A673 (cell line): ENCODE measurements at regions of chrX and their contacts with region 1.

Region 1: DNA sequence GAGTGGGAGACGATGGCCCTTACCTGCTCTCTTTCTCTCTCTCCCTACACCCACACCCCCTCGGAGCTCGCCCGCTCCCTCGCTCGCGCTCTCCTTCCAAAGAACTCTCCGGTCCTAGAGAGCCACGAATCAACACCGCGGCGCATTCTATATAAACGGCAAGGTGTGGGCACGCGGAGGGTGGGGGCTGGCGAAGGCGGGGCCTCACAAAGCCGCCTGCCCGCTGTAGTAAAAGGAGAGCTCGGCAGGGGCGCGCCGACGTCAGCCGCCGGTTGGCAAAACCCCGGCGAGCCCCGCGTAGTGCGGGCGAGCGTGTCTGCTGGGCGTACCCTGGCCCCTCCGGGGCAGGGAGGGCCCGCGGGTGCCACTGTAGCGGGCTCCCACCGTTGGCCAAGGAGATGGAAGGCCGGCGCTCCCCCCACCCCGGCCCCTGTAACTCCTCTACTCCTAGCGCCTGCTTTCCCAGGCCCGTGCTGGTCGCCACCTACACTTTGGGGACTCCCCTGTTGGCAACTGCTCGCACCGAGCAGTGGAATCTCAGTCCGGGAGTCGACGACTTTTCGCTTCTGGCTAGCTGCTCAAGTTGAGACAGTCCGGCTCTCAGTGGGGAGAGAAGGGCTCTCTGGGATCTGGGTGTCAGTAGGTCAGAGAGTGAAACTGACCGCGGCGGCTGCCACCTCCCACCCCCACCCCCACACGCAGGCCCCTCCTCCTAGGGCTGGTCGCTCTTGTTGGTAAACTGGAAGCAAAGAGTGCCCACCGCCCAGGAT is 325.5 kb upstream of the F9 start:
- DNase-seq: peak; percentile 83
- H3K4me3 ChIP-seq: peak overlapping the region; percentile 64
- H3K27ac ChIP-seq: peak overlapping the region; percentile 84
- H3K4me1 ChIP-seq: no peaks in the 10 kb centered on the region
- H3K27me3 ChIP-seq: no peaks in the 10 kb centered on the region
- CTCF ChIP-seq: no peak

Region 2: GRCh38 chrX:138775517-138775916 is 429.6 kb before region 1 on chrX:
- CTCF ChIA-PET with region 1: no interaction called
- POLR2A ChIA-PET with region 1: no interaction called
- intact Hi-C with region 1: loop called (anchors 5 kb)
- DNase-seq: peak; percentile 71
- H3K4me3 ChIP-seq: no peak overlapping the region
- H3K27ac ChIP-seq: no peak overlapping the region
- H3K4me1 ChIP-seq: peaks cover 22% of the 10 kb centered on the region
- H3K27me3 ChIP-seq: no peaks in the 10 kb centered on the region
- CTCF ChIP-seq: peak; percentile 60

Region 3: GRCh38 chrX:138847928-138848327 is 357.2 kb before region 1 on chrX:
- CTCF ChIA-PET with region 1: no interaction called
- POLR2A ChIA-PET with region 1: no interaction called
- intact Hi-C with region 1: loop called (anchors 5 kb)
- DNase-seq: peak; percentile 55
- H3K4me3 ChIP-seq: no peak overlapping the region
- H3K27ac ChIP-seq: no peak overlapping the region
- H3K4me1 ChIP-seq: peaks cover 43% of the 10 kb centered on the region
- H3K27me3 ChIP-seq: no peaks in the 10 kb centered on the region
- CTCF ChIP-seq: peak; percentile 58

Region 4: GRCh38 chrX:138917781-138918180 is 287.3 kb before region 1 on chrX:
- CTCF ChIA-PET with region 1: no interaction called
- POLR2A ChIA-PET with region 1: no interaction called
- intact Hi-C with region 1: loop called (anchors 5 kb)
- DNase-seq: peak; percentile 44
- H3K4me3 ChIP-seq: no peak overlapping the region
- H3K27ac ChIP-seq: no peak overlapping the region
- H3K4me1 ChIP-seq: peaks cover 18% of the 10 kb centered on the region
- H3K27me3 ChIP-seq: no peaks in the 10 kb centered on the region
- CTCF ChIP-seq: no peak

Region 5: DNA sequence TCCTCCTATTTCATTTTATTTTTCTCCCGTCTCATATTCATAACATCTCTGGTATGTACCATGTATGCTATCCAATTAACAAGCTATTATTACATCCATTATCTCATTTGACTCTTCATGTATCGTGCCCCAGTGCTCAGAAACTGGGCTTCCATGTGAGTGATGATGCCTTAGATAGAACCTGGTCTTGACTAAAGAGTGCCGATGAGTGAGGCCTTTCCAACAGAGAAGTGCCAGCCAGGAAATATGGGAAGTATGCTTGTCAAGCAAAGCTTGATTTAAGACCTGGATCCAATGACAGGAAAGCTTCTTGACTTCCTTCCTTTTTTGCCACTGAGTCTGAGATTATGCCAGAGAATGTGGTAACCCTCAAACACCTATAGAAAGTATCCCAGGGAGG is 121.9 kb before region 1 on chrX:
- CTCF ChIA-PET with region 1: no interaction called
- POLR2A ChIA-PET with region 1: no interaction called
- intact Hi-C with region 1: loop called (anchors 5 kb)
- DNase-seq: peak; percentile 80
- H3K4me3 ChIP-seq: no peak overlapping the region
- H3K27ac ChIP-seq: peak overlapping the region; percentile 62
- H3K4me1 ChIP-seq: peaks cover 66% of the 10 kb centered on the region
- H3K27me3 ChIP-seq: no peaks in the 10 kb centered on the region
- CTCF ChIP-seq: no peak

Region 6: DNA sequence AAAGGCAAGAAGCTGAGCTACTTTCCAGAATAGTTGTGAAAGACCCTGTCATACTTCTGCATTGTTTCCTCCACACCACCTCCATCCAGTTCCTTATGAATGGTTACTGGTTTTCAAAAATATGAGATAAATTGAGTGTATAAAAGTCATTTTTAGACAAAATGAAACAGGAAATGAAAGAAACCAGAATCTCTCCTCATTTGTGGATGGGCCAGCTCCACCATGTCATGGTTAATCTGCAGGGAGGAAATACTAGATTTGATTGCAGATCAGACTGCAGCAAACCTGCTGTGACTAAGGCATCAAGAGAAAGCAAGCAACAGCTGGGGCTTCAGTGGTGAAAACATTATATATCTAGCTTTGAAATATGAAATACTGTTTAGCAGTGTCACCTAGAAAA is 349.3 kb after region 1 on chrX:
- CTCF ChIA-PET with region 1: no interaction called
- POLR2A ChIA-PET with region 1: no interaction called
- intact Hi-C with region 1: loop called (anchors 5 kb)
- DNase-seq: peak; percentile 77
- H3K4me3 ChIP-seq: no peak overlapping the region
- H3K27ac ChIP-seq: peak overlapping the region; percentile 79
- H3K4me1 ChIP-seq: peaks cover 31% of the 10 kb centered on the region
- H3K27me3 ChIP-seq: no peaks in the 10 kb centered on the region
- CTCF ChIP-seq: no peak